Right cardiac atrium (tissue), 5 donors: ENCODE measurements at regions of chr2 and their contacts with region 1.

Region 1: DNA sequence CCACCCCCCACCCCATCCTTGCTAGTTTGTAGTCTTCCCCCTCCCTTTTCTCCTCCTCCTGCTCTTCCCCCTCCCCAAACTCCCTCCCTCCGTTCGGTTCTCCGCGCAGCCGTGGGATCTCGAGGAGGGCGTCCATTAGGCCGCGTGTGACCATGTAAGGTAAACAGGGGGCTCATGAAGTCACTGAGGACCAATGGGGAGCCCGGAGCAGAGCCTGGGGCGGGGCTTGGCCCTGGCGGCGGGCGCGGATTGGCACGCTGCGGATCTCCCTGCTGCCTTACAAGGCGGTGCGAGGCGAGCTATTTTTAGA is 246 bp upstream of the KLF7 start:
- DNase-seq: peak; percentile 99 to 100 (median 99)
- ATAC-seq: peak; percentile 95
- H3K4me3 ChIP-seq: peak overlapping the region; percentile 97
- H3K27ac ChIP-seq: peak overlapping the region; percentile 99
- H3K4me1 ChIP-seq: peaks cover 3% of the 10 kb centered on the region
- H3K27me3 ChIP-seq: no peaks in the 10 kb centered on the region

Region 2: GRCh38 chr2:207064128-207064690 is 101.8 kb before region 1 on chr2:
- intact Hi-C with region 1: no loop called
- DNase-seq: peak in 1 of 3 donors; percentile 45
- ATAC-seq: peak; percentile 33 to 87
- H3K4me3 ChIP-seq: no peak overlapping the region
- H3K27ac ChIP-seq: no peak overlapping the region
- H3K4me1 ChIP-seq: no peaks in the 10 kb centered on the region
- H3K27me3 ChIP-seq: no peaks in the 10 kb centered on the region

Region 3: DNA sequence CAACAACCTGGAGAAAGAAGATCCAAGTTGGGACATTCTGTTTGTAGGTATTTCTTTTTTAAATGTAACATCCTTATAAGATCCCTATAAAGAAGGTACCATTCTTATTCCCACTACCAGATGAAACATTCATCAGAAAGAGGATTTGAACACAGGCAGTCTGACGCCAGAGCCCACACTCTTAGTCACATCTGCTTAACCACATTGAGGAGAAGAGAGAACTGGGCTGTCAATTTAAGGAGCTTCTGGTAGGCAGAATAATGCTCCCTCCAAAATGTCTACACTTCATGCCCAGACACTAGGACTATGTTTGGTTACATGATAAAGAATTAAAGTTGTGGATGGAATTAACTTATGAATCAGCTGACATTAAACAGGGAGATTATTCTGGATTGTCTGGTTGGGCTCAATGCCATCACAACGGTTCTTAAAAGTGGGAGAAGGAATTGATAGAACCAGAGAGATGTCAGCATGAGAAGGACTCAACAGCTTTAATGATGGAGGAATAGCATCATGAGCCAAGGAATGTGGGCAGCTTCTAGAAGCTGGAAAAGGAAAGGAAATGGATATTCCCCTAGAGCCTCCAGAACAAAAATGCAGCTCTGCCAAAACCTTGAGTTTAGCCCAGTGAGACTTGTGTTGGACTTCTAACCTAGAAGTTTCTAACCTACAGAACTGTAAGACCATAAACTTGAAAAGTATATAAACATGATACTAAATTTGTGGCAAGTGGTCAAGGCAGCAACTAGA is 82.5 kb before region 1 on chr2:
- intact Hi-C with region 1: loop called in 1 of 4 experiments (anchors 5 kb)
- DNase-seq: no peak
- ATAC-seq: no peak
- H3K4me3 ChIP-seq: no peak overlapping the region
- H3K27ac ChIP-seq: no peak overlapping the region
- H3K4me1 ChIP-seq: peaks cover 8% of the 10 kb centered on the region
- H3K27me3 ChIP-seq: no peaks in the 10 kb centered on the region

Region 4: GRCh38 chr2:207334624-207335371 is 168.8 kb after region 1 on chr2:
- intact Hi-C with region 1: loop called in 3 of 4 experiments (anchors 5 to 10 kb)
- DNase-seq: peak; percentile 75 to 80 (median 76)
- ATAC-seq: peak; percentile 87 to 92
- H3K4me3 ChIP-seq: peak overlapping the region; percentile 26
- H3K27ac ChIP-seq: peak overlapping the region; percentile 93
- H3K4me1 ChIP-seq: peaks cover 5% of the 10 kb centered on the region
- H3K27me3 ChIP-seq: no peaks in the 10 kb centered on the region

Region 5: DNA sequence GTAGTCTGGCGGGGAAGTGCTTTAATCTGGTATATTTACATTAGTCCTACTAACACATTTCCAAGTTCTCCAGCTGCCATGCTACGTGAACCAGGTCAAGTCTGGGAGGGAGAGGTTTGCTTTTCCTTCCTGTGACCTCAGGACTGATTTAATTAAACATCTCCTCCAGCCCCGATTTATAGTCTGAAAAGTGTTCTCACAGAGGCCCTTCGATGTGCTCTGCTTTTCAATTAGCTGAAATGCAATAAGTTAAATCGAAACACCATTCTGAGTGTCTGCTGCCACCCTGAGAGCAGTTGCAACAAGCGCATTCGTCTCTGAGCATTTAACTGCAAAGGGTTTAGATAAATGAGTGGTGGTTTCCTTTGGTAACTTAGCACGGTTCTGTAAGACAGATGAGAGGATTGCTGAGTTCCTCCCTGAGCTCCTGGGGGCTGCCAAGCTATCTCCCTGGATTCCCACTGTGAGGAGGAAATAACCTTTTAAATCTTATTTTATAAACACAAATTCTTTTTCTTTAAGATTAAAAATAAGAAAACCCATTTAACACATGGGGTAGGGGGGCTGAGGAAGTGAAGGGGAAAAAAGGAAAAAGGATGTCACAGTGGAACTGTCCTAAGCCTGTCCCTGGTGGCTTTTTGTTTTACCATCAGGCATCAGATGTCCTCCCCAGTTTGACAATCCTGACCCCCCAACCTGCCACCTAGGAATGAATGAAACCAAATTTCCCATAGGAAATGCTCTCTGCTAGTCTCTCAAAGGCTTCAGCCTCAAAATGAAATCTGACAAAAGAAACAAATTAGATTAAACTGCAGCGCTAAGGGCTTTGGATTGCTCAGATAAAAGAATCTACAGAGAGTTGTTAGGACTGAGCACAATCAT is 307.3 kb after region 1 on chr2:
- intact Hi-C with region 1: loop called in 3 of 4 experiments (anchors 5 to 10 kb)
- DNase-seq: peak in 2 of 3 donors; percentile 33 to 50
- ATAC-seq: peak; percentile 83 to 89
- H3K4me3 ChIP-seq: no peak overlapping the region
- H3K27ac ChIP-seq: no peak overlapping the region
- H3K4me1 ChIP-seq: no peaks in the 10 kb centered on the region
- H3K27me3 ChIP-seq: no peaks in the 10 kb centered on the region